Common myeloid progenitor, CD34-positive (primary cell): ENCODE measurements at regions of chr12 and their contacts with region 1.

Region 1: DNA sequence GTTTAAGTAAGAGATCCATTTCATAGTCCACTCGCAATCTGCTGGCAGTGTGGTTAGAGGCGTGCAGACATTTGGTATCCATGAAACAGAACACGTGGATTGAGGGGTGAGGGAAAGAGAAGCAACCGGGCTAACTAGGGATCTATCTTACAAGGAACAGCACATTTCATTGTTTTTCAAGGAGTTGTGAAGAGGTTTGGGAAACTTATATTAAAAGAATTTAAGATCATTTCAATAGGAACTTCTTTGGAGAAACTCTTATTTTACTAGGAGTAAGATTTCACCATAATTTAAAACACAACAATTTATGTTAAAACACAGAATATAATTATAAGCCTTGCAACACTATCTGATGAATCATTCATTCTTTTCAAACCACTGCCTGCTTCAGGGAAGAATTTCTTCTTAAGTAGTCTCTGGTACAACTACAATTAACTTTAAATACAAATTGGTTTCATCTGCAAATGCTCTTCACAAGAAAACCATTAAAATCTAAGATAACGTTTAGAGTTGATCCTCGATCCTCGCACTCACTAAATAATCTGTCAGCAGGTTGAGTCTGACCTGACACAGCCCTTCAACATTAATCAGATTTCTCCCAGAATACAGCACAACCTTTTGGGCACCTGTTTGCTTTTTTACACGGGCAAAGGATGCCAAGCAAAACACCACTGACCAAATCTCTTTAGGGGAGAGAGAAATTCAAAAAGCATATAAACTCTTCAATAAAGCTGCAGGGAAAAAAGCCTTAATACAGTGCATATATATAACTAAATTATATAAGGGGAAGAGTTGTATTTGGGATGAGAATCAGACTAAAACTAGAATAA is 27.3 kb downstream of the PPTC7 start:
- DNase-seq: no peak
- H3K4me3 ChIP-seq: no peak overlapping the region
- H3K27ac ChIP-seq: no peak overlapping the region
- H3K4me1 ChIP-seq: peaks cover 0 to 16% (median 8%) of the 10 kb centered on the region in 4 experiments
- H3K27me3 ChIP-seq: no peaks in the 10 kb centered on the region

Region 2: GRCh38 chr12:110449799-110450497 is 105.8 kb before region 1 on chr12 and contains the start of gene ARPC3:
- CTCF ChIA-PET with region 1: interaction called, 12 read pairs
- POLR2A ChIA-PET with region 1: no interaction called
- DNase-seq: peak; percentile 96 to 98 (median 97)
- H3K4me3 ChIP-seq: peak within 1 kb of the TSS; percentile 74 to 96 (median 89)
- H3K27ac ChIP-seq: peak within 1 kb of the TSS; percentile 98 to 99
- H3K4me1 ChIP-seq: peaks cover 5 to 36% (median 23%) of the 10 kb centered on the region in 4 experiments
- H3K27me3 ChIP-seq: no peaks in the 10 kb centered on the region

Region 3: DNA sequence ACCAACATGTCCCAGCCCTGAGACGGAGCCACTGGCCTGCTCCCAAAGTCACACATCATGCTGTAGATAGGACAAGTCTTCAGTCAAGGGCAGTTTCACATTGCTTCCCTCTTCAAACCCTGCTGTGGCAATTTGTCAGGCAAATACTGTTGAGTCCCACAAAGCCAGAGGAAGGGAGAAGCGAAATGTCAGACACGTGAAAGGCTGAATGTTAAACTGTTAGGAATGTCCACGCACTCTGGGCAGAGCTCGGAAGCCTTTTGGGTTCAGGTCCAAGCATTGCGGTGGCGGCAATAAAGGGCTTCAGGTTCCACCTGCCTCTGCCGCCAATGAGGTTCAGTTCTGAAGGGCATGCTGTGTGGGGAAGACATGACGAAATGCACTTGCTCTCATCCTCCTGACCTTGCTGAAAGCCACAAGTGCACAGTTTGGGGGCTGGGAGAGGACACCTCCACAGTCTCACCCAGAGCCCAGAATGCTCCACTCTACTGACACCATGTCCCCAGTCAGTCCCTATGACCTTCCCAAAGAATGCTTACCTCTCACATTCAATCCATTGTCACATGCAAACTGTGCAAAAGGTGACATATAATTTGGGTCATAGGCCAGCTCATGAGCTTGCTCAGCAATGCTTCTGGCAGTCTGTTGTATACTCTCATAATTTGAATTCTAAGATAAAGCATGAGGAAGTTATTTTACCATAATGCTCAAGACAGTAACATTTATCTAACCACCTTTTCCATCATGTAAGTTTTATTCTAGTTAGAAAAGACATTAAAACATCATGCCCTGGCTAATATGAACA is 18.0 kb before region 1 on chr12:
- CTCF ChIA-PET with region 1: interaction called, 30 read pairs
- POLR2A ChIA-PET with region 1: no interaction called
- DNase-seq: no peak
- H3K4me3 ChIP-seq: no peak overlapping the region
- H3K27ac ChIP-seq: no peak overlapping the region
- H3K4me1 ChIP-seq: no peaks in the 10 kb centered on the region
- H3K27me3 ChIP-seq: no peaks in the 10 kb centered on the region

Region 4: GRCh38 chr12:110575326-110575725 is 19.5 kb after region 1 on chr12:
- CTCF ChIA-PET with region 1: interaction called, 10 read pairs
- POLR2A ChIA-PET with region 1: interaction called, 3 read pairs
- DNase-seq: no peak
- H3K4me3 ChIP-seq: no peak overlapping the region
- H3K27ac ChIP-seq: no peak overlapping the region
- H3K4me1 ChIP-seq: peaks cover 8 to 40% (median 25%) of the 10 kb centered on the region in 4 experiments
- H3K27me3 ChIP-seq: no peaks in the 10 kb centered on the region

Region 5: DNA sequence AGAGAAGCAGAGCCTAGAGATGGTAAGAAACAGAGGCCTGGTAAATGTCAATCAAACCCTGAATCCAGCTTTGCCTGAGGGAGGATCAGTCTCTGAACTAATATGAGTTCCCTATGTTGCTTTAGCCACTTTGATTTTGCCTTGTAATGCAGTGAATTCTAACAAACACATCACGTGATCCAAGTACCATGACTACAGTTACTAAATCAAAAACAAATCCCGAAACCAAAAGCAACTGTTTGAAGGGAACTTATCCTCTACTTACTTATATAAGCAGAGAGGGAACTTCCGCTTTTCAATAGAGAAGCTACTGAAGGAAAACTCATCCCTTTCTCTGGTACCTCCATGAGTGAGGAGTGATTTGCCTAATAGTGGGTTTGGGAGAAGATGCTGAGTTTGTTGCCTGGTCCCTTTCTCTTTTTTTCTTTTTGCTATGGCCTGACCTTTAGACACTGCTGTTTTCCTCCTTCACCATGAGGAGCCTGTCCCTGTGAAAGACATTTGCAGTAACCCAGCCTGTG is 35.1 kb after region 1 on chr12:
- CTCF ChIA-PET with region 1: interaction called, 27 read pairs
- POLR2A ChIA-PET with region 1: no interaction called
- DNase-seq: peak; percentile 94 to 98 (median 97)
- H3K4me3 ChIP-seq: peak overlapping the region in 2 of 7 experiments; percentile 37 to 39
- H3K27ac ChIP-seq: peak overlapping the region; percentile 83 to 93
- H3K4me1 ChIP-seq: peaks cover 11 to 33% (median 28%) of the 10 kb centered on the region in 4 experiments
- H3K27me3 ChIP-seq: no peaks in the 10 kb centered on the region